ENCODE measurements at regions of chr5 and their contacts with region 1.

Region 1: DNA sequence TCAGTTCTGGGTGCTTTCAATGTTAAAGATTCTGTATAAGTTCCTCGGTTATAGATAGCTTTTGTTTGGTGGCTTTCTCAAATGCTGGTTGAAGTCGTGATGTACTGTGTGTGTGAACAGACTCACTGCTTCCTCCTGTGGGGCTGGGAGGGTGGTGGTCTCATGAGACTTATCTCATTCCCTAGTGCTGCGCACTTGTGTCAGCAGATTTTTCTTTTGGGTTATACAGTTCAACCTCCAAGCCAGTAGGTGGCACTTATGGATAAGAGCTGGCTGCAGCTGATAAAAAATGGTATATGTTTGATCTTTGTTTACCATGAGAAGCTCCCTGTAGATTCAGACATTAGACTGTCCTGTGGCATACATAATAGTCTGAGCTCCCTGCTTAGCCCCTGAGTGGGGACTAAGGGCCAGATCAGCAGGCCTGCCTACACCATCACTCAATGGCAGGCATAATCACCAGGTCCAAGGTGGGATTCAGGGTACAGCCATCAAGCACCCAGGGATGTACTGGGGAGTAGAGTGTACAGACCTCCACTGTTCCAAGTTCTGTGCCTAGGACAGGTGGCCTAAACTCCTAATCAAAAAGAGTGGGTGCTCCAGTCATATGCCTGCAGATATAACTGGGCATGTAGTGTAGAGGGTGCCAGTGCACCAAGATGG is 174.2 kb downstream of the OXCT1 start:
- DNase-seq: no peak
- H3K4me3 Mint-ChIP-seq: no peak overlapping the region
- H3K27ac Mint-ChIP-seq: no peak overlapping the region
- H3K4me1 Mint-ChIP-seq: no peaks in the 10 kb centered on the region
- H3K27me3 Mint-ChIP-seq: peaks cover 24% of the 10 kb centered on the region

Region 2: DNA sequence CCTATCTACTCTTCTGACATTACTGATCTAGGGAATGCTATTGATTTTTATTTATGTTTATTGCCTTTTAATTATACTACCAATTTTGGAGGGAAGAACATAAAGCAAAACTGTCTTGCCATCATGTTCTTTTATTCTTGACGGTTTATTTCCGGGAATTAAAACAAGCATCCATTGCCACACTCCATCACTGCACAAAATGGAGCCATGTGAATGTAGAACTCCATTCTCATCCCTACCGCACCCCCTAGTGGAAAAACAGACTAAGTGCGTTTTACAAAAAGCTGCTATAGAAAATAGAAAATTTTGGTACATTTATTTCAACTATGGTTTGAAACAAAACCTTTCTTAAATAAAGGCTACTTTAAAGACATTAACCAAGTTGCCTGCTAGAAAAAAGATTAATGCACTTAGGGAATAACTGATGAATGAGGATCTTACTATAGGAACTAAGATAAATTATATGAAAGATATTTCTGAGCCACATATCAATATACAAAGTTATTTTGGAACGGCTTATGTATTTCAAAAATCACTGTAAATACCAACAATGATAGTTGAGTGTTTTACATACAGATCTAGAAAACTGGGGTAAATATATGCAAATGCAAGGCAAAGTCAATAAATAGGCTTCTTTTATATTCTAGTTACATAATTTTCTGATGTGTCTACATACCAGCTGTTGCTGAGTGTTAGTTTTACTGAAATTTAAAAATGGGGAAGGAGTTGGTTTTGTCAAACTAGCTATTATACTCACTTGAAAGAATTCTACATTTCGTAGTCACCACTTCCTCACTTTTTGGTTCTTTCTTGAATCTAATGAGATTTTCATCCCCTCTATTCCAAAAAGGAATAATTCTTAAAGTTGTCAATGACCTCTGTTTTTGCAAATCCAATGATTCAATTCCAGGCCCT is 147.7 kb after region 1 on chr5:
- intact Hi-C with region 1: loop called (anchors 2 kb)
- DNase-seq: peak; percentile 77
- H3K4me3 Mint-ChIP-seq: no peak overlapping the region
- H3K27ac Mint-ChIP-seq: no peak overlapping the region
- H3K4me1 Mint-ChIP-seq: peaks cover 7% of the 10 kb centered on the region
- H3K27me3 Mint-ChIP-seq: no peaks in the 10 kb centered on the region

Region 3: DNA sequence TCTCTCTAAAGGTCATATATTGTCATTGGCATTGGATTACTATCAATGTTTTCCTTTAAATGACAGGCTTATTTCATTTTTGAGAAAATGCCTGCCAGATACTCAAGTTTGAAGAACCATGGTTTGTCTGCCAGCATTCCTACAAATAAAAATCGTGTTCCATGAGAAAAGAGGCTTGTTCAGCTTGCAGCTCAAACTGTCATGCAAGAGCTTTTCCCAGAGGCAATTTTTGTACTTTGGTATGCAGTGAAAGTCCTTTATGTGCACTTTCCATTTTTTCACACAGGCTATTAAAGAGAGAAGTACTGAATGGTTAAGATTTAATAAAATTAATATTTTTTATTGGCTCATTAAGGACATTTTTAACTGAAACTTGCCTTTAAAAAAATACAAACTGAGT is 339.5 kb after region 1 on chr5:
- intact Hi-C with region 1: no loop called
- DNase-seq: no peak
- H3K4me3 Mint-ChIP-seq: no peak overlapping the region
- H3K27ac Mint-ChIP-seq: no peak overlapping the region
- H3K4me1 Mint-ChIP-seq: no peaks in the 10 kb centered on the region
- H3K27me3 Mint-ChIP-seq: peaks cover 6% of the 10 kb centered on the region